Colonic mucosa (tissue), 4 donors: ENCODE measurements at regions of chr16 and their contacts with region 1.

Region 1: DNA sequence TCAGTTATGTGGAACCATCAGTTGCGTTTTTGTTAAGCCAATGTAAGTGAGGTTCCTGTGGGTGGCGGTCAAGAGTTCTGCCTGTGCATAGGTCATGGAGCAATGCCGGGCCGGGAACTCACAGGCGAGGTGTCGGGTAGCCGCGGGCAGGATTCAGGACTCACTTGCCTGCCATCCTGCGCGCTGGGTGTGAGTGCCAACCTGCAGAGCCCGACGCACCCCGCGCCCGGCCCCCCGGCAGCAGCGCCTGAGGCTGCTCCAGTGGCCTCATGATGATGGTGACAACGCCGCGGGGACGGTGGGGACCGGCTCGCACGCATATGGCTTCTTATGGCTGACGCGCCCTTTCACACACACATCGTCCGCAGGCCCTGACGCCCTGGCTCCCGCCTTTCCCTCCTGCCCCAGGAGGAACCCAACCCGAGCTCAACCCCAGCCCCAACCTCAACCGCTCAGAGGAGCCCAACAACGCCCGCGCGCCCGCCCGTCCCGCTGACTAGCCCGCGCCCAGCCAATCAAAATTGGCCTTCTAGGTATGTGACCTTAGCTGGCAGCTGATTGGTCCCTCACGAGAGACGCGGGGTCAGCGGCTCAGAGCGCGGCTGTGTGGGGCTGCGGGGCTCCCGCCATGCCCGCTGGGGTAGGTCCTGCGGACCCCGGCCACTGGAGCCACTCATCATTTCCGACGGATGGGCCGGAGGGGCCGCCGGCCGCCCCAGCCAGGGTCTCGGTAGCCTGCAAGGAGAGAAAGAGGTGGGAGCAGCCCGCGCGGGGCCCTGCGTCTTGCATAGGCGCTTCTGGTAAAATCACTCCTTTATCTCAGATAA is at the start of gene C16orf95:
- DNase-seq: peak; percentile 98
- H3K4me3 ChIP-seq: peak within 1 kb of the TSS; percentile 87
- H3K27ac ChIP-seq: peak within 1 kb of the TSS; percentile 92
- H3K4me1 ChIP-seq: no peaks in the 10 kb centered on the region
- H3K27me3 ChIP-seq: no peaks in the 10 kb centered on the region
- CTCF ChIP-seq: peak; percentile 69
- total RNA-seq, gene C16orf95: 5.0 to 9.7 TPM

Region 2: GRCh38 chr16:87391950-87392822 is 75.0 kb after region 1 on chr16 and contains the start of gene MAP1LC3B:
- intact Hi-C with region 1: loop called (anchors 5 kb)
- DNase-seq: peak; percentile 96
- H3K4me3 ChIP-seq: peak within 1 kb of the TSS; percentile 59
- H3K27ac ChIP-seq: peak within 1 kb of the TSS; percentile 95
- H3K4me1 ChIP-seq: peaks cover 15% of the 10 kb centered on the region
- H3K27me3 ChIP-seq: no peaks in the 10 kb centered on the region
- CTCF ChIP-seq: no peak
- total RNA-seq, gene MAP1LC3B: 45.0 to 83.0 TPM

Region 3: GRCh38 chr16:87431926-87432325 is 114.8 kb after region 1 on chr16:
- intact Hi-C with region 1: no loop called
- DNase-seq: no peak
- H3K4me3 ChIP-seq: no peak overlapping the region
- H3K27ac ChIP-seq: no peak overlapping the region
- H3K4me1 ChIP-seq: no peaks in the 10 kb centered on the region
- H3K27me3 ChIP-seq: no peaks in the 10 kb centered on the region
- CTCF ChIP-seq: no peak